Sigmoid colon (tissue), 7 donors: ENCODE measurements at regions of chrX and their contacts with region 1.

Region 1: DNA sequence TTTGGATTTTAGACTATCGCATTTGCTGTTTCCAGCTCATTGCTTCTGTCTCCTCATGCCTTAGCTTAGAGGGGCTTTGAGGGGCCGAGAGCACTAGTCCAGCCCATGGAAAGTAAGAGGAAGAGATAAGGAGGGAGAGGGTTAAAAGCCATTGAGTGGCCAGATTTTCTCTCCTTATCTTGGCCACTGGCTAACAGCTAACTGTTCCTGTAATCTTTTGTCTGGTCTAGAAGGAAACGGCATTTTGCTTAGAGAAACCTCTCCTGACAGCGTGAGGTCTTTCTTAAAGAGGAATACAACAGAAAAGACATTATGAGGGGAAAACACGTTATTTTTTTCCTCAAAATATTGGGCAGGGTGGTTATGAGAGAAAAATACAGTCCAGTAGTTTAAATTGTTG is 7.9 kb downstream of the GPR101 start:
- DNase-seq: no peak
- H3K4me3 ChIP-seq: no peak overlapping the region
- H3K27ac ChIP-seq: no peak overlapping the region
- H3K4me1 ChIP-seq: no peaks in the 10 kb centered on the region
- H3K27me3 ChIP-seq: peaks cover 0 to 7% (median 0%) of the 10 kb centered on the region in 3 donors
- CTCF ChIP-seq: no peak
- EP300 ChIP-seq: no peak
- POLR2A ChIP-seq: no peak

Region 2: DNA sequence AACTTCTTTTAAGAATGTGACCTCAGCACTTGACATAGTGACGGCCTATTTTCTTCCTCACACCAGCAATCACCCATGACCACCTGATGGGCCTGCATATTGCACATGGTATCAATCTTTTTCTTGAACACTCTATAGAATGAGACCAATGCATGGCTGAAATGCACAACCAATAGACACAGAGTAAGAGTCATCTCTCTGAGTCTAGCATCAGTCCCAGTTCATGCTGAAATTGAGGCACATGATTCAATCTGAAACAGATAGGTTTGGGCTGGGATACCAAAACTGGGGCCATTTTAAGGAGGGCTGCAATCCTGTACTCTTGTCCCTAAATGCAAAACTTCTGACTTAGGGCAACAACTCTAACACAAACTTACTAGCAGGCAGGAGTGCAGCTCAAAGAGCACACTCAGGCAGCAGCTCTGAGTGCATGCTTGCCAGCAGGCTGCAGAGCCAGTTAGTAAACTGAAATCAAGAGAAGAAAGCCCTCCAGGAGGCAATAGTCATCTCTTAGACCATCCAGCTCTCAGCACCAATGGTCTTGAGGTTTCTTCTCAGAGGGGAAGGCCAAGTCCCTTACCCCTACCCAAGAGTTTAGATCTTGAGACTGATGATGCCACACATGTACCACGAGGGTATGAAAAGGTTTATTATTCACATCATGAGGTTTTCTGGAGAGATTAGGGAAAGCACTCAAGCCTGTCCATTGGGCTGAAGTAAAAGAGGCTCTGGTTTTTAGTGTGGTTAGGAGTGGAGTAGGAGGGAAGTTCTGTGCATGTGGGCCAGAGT is 32.6 kb after region 1 on chrX:
- intact Hi-C with region 1: loop called (anchors 2 kb)
- DNase-seq: no peak
- H3K4me3 ChIP-seq: no peak overlapping the region
- H3K27ac ChIP-seq: no peak overlapping the region
- H3K4me1 ChIP-seq: no peaks in the 10 kb centered on the region
- H3K27me3 ChIP-seq: no peaks in the 10 kb centered on the region
- CTCF ChIP-seq: no peak
- EP300 ChIP-seq: no peak
- POLR2A ChIP-seq: no peak